Aorta (tissue), 5 donors: ENCODE measurements at regions of chr14 and their contacts with region 1.

Region 1: DNA sequence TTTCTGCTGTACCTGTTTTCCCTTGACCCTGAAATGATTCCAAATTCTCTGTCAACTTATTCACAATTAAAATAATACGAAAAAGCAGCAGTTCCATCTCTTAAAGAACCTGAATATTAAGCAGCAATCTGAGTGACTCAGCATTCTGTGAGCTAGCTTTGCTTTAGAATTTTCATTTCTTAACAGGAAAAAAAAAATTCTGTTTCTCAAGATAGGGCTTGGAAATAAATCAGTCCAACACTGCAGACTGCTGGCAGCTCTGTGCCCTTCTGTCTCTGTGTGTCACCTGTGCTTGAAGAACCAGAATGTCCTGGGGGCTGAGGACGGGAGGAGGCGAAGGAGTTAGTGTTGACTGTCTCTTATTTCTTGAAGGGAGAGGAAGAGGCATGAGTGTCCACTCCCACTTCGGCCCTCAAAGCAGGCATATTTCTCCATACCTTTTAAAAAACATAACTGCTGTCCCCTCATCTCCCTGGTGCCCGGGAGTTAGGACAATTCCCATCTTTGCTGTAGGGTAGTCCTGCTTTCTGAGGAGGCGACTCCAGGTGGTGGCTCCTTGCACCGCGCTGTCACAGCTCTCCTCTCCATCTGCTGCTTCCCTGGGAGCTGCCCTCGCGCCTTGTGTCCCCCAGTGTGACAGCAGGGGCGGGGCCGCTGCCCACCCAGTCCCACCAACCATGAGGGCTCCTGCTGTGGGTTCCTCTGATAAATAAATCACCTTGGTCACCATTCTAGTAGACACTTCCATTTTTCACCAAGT is 203.1 kb downstream of the CALM1 start:
- DNase-seq: no peak
- ATAC-seq: peak; percentile 45
- H3K4me3 ChIP-seq: no peak overlapping the region
- H3K27ac ChIP-seq: no peak overlapping the region
- H3K4me1 ChIP-seq: no peaks in the 10 kb centered on the region
- H3K27me3 ChIP-seq: no peaks in the 10 kb centered on the region

Region 2: GRCh38 chr14:90301668-90302090 is 298.2 kb before region 1 on chr14:
- intact Hi-C with region 1: loop called in 1 of 2 experiments (anchors 5 kb)
- DNase-seq: no peak
- ATAC-seq: peak; percentile 78
- H3K4me3 ChIP-seq: no peak overlapping the region
- H3K27ac ChIP-seq: peak overlapping the region in 1 of 2 donors; percentile 61
- H3K4me1 ChIP-seq: peaks cover 0 to 3% of the 10 kb centered on the region in 2 donors
- H3K27me3 ChIP-seq: no peaks in the 10 kb centered on the region